ENCODE measurements at regions of chr11 and their contacts with region 1.

Region 1: DNA sequence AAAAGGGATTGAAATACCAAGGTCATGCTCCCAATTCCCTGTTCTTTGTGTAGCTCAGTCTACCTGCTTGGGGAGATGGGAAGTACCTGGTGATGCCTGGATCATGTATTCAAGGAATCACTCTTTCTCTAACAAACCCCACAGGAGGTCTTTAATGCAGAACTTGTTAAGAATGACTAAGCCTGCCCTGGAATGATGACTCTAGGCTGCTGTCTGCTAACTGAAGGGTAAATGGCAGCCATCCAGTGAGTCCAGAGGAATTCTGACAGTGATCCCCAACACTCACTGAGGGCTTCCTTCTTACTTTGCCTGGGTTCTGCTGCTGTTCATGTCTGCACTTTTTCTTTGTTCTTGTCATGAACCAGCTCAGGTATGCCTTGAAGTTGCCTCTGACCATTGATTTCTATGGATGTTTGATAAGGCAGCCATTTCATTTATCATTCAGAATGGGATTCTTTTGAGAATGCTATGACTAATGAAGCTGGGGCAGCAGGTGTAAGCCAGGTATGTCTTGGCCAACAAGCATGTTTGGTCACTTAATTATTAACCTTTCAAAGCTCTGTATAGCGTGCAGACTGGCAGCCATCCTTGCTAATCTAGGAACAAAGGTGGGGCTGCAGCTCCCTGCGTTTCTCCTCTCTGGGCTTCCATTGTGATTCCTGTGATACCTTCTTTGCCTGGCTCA is 11.4 kb downstream of the PRSS23 start:
- DNase-seq: peak; percentile 92 to 95
- H3K4me3 ChIP-seq: no peak overlapping the region
- H3K4me3 Mint-ChIP-seq: peak overlapping the region; percentile 49
- H3K27ac Mint-ChIP-seq: peak overlapping the region; percentile 92
- H3K4me1 ChIP-seq: peaks cover 98% of the 10 kb centered on the region
- H3K4me1 Mint-ChIP-seq: peaks cover 92% of the 10 kb centered on the region
- H3K27me3 ChIP-seq: no peaks in the 10 kb centered on the region
- H3K27me3 Mint-ChIP-seq: no peaks in the 10 kb centered on the region
- CTCF ChIP-seq: no peak

Region 2: DNA sequence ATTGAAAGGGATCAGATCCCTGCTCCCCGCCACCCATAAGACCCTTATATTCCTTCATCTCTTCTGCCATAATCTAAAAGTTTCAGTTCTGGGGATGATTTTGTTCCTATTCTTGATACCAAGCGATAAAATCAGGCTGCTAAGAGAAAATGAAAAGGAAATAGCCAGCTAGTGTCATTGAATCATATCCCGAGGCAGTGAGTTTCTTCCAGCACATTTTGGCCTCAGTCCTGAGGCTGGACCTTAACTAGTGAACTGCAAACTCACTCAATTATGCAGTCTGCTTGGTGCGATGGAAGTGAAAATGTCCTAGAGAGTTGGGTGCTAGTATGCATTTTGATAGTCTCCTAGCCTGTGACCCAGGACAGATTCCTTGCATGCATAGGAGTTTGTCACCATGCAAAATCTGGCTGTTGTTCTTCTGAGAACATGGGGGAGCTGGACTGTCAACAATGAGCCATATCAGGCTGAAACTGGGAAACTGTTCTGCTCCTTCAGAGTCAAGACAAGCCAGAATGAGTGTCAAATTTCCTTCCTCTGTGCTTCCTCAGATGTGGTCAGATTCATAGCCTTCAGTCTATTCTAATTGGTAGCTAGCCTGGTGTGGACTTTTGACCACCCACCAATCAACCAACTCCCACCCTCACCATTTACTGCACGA is 334.2 kb before region 1 on chr11:
- CTCF ChIA-PET with region 1: interaction called, 3 read pairs
- POLR2A ChIA-PET with region 1: interaction called, 12 read pairs
- intact Hi-C with region 1: no loop called
- DNase-seq: no peak
- H3K4me3 ChIP-seq: no peak overlapping the region
- H3K4me3 Mint-ChIP-seq: no peak overlapping the region
- H3K27ac Mint-ChIP-seq: no peak overlapping the region
- H3K4me1 ChIP-seq: peaks cover 43% of the 10 kb centered on the region
- H3K4me1 Mint-ChIP-seq: peaks cover 40% of the 10 kb centered on the region
- H3K27me3 ChIP-seq: no peaks in the 10 kb centered on the region
- H3K27me3 Mint-ChIP-seq: no peaks in the 10 kb centered on the region
- CTCF ChIP-seq: no peak

Region 3: DNA sequence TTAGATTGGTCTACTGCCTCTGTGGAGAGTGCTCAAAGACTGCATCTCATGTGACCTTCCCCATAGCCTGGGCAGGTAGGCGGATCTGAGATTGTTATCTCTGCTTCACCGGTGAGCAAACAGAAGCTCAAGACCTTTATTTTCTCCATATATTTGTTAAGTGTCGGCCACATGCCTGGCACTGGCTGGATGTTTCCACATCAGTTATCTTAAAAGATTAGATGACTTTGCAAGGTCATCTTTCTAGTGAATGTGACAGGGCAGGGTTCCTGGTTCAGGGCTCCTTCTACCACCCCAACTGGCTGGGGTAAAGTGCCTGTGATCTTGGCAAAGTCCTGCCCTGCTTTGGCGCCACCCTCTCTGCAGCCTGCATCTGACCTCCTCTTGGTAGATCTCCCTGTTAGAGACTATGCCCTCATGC is 312.0 kb before region 1 on chr11:
- CTCF ChIA-PET with region 1: no interaction called
- POLR2A ChIA-PET with region 1: no interaction called
- intact Hi-C with region 1: loop called (anchors 1 kb)
- DNase-seq: peak; percentile 89 to 94
- H3K4me3 ChIP-seq: no peak overlapping the region
- H3K4me3 Mint-ChIP-seq: no peak overlapping the region
- H3K27ac Mint-ChIP-seq: no peak overlapping the region
- H3K4me1 ChIP-seq: peaks cover 59% of the 10 kb centered on the region
- H3K4me1 Mint-ChIP-seq: peaks cover 13% of the 10 kb centered on the region
- H3K27me3 ChIP-seq: no peaks in the 10 kb centered on the region
- H3K27me3 Mint-ChIP-seq: no peaks in the 10 kb centered on the region
- CTCF ChIP-seq: no peak

Region 4: GRCh38 chr11:86571273-86571948 is 240.4 kb before region 1 on chr11:
- CTCF ChIA-PET with region 1: interaction called, 10 read pairs
- POLR2A ChIA-PET with region 1: no interaction called
- intact Hi-C with region 1: no loop called
- DNase-seq: peak; percentile 93
- H3K4me3 ChIP-seq: no peak overlapping the region
- H3K4me3 Mint-ChIP-seq: peak overlapping the region; percentile 6
- H3K27ac Mint-ChIP-seq: peak overlapping the region; percentile 2
- H3K4me1 ChIP-seq: peaks cover 32% of the 10 kb centered on the region
- H3K4me1 Mint-ChIP-seq: peaks cover 37% of the 10 kb centered on the region
- H3K27me3 ChIP-seq: no peaks in the 10 kb centered on the region
- H3K27me3 Mint-ChIP-seq: no peaks in the 10 kb centered on the region
- CTCF ChIP-seq: peak; percentile 95 to 96

Region 5: DNA sequence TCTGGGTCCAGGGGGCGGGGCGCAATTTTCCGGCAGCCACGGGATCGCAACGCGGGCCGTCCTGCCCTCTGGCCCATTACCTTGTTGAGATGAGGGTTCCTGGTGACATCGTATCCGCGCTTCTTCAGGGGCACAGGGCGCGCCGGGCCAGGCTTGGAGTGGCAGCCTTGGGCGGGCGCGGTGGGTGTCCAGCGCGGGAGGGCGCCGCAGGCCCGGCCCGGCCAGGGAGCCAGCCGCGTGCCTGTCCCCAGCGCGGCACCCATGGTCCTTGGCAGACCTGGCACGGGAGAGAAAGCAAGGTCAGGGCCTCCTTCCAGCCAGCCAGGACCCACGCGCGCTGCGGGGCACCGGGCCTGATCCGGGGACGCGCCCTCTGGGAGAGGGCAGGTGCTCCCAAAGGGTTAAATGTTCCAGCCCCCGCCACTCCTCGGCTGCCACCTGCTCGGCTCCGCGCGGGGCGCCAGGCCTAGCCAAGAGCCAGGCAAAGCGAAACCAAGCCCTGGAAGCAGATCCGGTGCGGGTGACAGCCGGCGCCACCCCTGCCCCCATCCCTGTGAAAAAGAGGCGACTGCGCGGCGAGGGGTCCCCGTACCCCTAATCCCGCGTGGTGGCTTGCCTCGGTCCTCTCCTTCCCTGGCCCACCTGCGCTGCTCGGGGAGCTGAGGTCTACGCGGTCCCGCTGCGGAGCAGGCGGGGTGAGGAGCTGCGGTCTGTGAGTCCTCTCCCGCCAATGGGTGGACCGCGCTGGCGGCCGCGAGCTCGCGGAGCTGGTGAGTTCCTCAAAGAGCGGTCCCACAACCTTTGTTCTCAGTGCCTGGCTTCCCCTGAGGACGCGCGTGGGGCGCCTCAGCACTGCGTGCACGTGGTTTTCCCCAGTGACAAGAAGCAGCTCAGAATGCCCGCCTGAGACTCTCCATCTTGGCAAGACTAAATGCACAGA is 139.8 kb before region 1 on chr11 and contains the start of gene ME3:
- CTCF ChIA-PET with region 1: interaction called, 4 read pairs
- POLR2A ChIA-PET with region 1: interaction called, 4 read pairs
- intact Hi-C with region 1: loop called (anchors 1 kb)
- DNase-seq: peak; percentile 87 to 90
- H3K4me3 ChIP-seq: peak within 1 kb of the TSS; percentile 95
- H3K4me3 Mint-ChIP-seq: peak within 1 kb of the TSS; percentile 84
- H3K27ac Mint-ChIP-seq: peak within 1 kb of the TSS; percentile 87
- H3K4me1 ChIP-seq: peaks cover 50% of the 10 kb centered on the region
- H3K4me1 Mint-ChIP-seq: peaks cover 76% of the 10 kb centered on the region
- H3K27me3 ChIP-seq: no peaks in the 10 kb centered on the region
- H3K27me3 Mint-ChIP-seq: no peaks in the 10 kb centered on the region
- CTCF ChIP-seq: peak; percentile 8 to 31
- total RNA-seq, gene ME3: 32.8 and 36.9 TPM in 2 replicates

Region 6: DNA sequence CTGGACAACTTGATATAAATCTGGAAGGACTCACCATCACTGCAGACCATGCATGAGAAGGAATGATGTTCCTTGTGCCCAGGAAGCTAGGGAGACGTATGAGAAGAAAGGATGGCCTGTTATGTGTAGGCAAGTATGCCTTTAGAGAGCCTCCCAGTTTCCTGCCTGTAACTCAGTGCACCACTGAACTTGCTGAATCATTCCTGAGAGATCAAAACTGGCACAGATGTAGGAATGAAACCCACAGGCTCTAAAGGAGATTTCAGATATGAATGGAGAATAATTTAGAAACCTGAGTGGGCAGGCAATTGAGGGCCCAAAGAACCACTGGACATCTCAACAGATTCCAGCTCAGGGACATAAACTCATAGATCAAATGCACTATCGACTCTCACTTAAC is 49.8 kb before region 1 on chr11:
- CTCF ChIA-PET with region 1: no interaction called
- POLR2A ChIA-PET with region 1: no interaction called
- intact Hi-C with region 1: no loop called
- DNase-seq: no peak
- H3K4me3 ChIP-seq: no peak overlapping the region
- H3K4me3 Mint-ChIP-seq: no peak overlapping the region
- H3K27ac Mint-ChIP-seq: no peak overlapping the region
- H3K4me1 ChIP-seq: peaks cover 21% of the 10 kb centered on the region
- H3K4me1 Mint-ChIP-seq: peaks cover 22% of the 10 kb centered on the region
- H3K27me3 ChIP-seq: no peaks in the 10 kb centered on the region
- H3K27me3 Mint-ChIP-seq: no peaks in the 10 kb centered on the region
- CTCF ChIP-seq: no peak

Region 7: DNA sequence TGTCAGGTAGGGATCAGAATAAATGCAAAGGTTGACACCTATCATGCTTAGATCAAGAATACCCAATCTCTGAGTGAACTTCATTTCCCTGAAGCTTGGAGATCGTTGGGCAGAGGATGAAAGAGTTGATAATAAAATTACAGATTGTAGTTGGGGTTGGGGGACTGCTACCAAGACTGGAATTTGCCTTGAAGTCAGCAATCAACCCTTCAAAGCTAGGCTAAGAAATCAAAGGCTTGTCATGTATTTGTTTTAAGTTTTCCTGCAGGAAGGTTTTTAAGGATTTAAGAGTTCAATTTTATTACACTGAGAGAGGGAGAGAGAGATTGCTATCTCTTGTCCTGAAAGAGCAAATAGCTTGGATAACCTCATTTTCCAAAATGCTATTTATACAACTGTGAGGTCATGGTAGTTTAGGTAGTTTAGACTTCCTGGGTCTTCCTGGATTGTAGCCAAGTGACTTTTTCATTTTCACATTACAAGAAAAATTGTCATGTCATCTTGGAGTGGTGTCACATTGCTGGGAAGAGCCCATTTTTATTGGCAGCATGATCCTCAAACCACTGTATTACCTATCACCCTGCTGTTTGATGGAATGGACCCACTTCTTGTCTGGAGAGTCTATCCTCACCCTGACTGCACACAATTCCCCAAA is 21.6 kb before region 1 on chr11:
- CTCF ChIA-PET with region 1: interaction called, 8 read pairs
- POLR2A ChIA-PET with region 1: interaction called, 7 read pairs
- intact Hi-C with region 1: loop called (anchors 1 kb)
- DNase-seq: peak; percentile 65 to 72
- H3K4me3 ChIP-seq: no peak overlapping the region
- H3K4me3 Mint-ChIP-seq: peak overlapping the region; percentile 30
- H3K27ac Mint-ChIP-seq: peak overlapping the region; percentile 79
- H3K4me1 ChIP-seq: peaks cover 88% of the 10 kb centered on the region
- H3K4me1 Mint-ChIP-seq: peaks cover 75% of the 10 kb centered on the region
- H3K27me3 ChIP-seq: no peaks in the 10 kb centered on the region
- H3K27me3 Mint-ChIP-seq: no peaks in the 10 kb centered on the region
- CTCF ChIP-seq: no peak

Region 8: GRCh38 chr11:86938900-86939880 is 127.4 kb after region 1 on chr11:
- CTCF ChIA-PET with region 1: no interaction called
- POLR2A ChIA-PET with region 1: no interaction called
- intact Hi-C with region 1: no loop called
- DNase-seq: peak in 1 of 2 experiments; percentile 75
- H3K4me3 ChIP-seq: no peak overlapping the region
- H3K4me3 Mint-ChIP-seq: peak overlapping the region; percentile 60
- H3K27ac Mint-ChIP-seq: peak overlapping the region; percentile 84
- H3K4me1 ChIP-seq: peaks cover 51% of the 10 kb centered on the region
- H3K4me1 Mint-ChIP-seq: peaks cover 52% of the 10 kb centered on the region
- H3K27me3 ChIP-seq: no peaks in the 10 kb centered on the region
- H3K27me3 Mint-ChIP-seq: no peaks in the 10 kb centered on the region
- CTCF ChIP-seq: peak; percentile 79 to 83